ENCODE measurements at regions of chr10 and their contacts with region 1.

Region 1: GRCh38 chr10:64726466-64726865 is 1205.3 kb downstream of the REEP3 start:
- DNase-seq: no peak
- H3K4me3 ChIP-seq: no peak overlapping the region
- H3K27ac ChIP-seq: no peak overlapping the region
- H3K4me1 ChIP-seq: no peaks in the 10 kb centered on the region
- H3K27me3 ChIP-seq: no peaks in the 10 kb centered on the region
- CTCF ChIP-seq: no peak
- POLR2A ChIP-seq: no peak

Region 2: DNA sequence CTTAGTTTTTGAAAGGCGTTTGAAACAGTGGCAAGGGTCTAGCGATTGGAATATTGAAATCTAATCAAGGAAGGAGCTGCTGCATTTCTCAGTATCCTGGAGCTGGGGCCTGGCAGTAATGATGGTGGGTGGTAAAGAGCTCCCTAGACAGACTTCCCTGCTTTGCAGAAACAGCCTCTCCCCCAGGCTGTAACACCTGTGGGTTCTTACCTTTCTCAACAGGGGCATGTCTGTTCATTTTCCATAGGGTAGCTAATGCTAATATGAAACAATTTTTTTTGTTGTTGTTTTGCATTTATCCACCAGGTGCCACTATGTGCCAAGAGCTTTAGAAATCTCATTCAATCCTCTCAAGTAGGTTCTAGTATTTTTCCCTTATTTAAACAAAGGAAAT is 859.7 kb before region 1 on chr10:
- intact Hi-C with region 1: no loop called
- DNase-seq: no peak
- H3K4me3 ChIP-seq: no peak overlapping the region
- H3K27ac ChIP-seq: no peak overlapping the region
- H3K4me1 ChIP-seq: no peaks in the 10 kb centered on the region
- H3K27me3 ChIP-seq: peaks cover 0 to 23% of the 10 kb centered on the region in 2 donors
- CTCF ChIP-seq: peak in 1 of 3 donors; percentile 7
- POLR2A ChIP-seq: no peak

Region 3: GRCh38 chr10:64690194-64690593 is 36.3 kb before region 1 on chr10:
- intact Hi-C with region 1: no loop called
- DNase-seq: no peak
- H3K4me3 ChIP-seq: no peak overlapping the region
- H3K27ac ChIP-seq: no peak overlapping the region
- H3K4me1 ChIP-seq: no peaks in the 10 kb centered on the region
- H3K27me3 ChIP-seq: no peaks in the 10 kb centered on the region
- CTCF ChIP-seq: no peak
- POLR2A ChIP-seq: no peak

Region 4: GRCh38 chr10:64798297-64798696 is 71.8 kb after region 1 on chr10:
- intact Hi-C with region 1: no loop called
- DNase-seq: no peak
- H3K4me3 ChIP-seq: no peak overlapping the region
- H3K27ac ChIP-seq: no peak overlapping the region
- H3K4me1 ChIP-seq: no peaks in the 10 kb centered on the region
- H3K27me3 ChIP-seq: no peaks in the 10 kb centered on the region
- CTCF ChIP-seq: no peak
- POLR2A ChIP-seq: no peak

Region 5: GRCh38 chr10:66642217-66642616 is 1915.8 kb after region 1 on chr10:
- intact Hi-C with region 1: loop called (anchors 5 kb)
- DNase-seq: no peak
- H3K4me3 ChIP-seq: no peak overlapping the region
- H3K27ac ChIP-seq: no peak overlapping the region
- H3K4me1 ChIP-seq: no peaks in the 10 kb centered on the region
- H3K27me3 ChIP-seq: no peaks in the 10 kb centered on the region
- CTCF ChIP-seq: no peak
- POLR2A ChIP-seq: no peak